Activated B cell treated with CpG ODN at 0.5 μM for 24 hours (primary cell): ENCODE measurements at regions of chr19 and their contacts with region 1.

Region 1: DNA sequence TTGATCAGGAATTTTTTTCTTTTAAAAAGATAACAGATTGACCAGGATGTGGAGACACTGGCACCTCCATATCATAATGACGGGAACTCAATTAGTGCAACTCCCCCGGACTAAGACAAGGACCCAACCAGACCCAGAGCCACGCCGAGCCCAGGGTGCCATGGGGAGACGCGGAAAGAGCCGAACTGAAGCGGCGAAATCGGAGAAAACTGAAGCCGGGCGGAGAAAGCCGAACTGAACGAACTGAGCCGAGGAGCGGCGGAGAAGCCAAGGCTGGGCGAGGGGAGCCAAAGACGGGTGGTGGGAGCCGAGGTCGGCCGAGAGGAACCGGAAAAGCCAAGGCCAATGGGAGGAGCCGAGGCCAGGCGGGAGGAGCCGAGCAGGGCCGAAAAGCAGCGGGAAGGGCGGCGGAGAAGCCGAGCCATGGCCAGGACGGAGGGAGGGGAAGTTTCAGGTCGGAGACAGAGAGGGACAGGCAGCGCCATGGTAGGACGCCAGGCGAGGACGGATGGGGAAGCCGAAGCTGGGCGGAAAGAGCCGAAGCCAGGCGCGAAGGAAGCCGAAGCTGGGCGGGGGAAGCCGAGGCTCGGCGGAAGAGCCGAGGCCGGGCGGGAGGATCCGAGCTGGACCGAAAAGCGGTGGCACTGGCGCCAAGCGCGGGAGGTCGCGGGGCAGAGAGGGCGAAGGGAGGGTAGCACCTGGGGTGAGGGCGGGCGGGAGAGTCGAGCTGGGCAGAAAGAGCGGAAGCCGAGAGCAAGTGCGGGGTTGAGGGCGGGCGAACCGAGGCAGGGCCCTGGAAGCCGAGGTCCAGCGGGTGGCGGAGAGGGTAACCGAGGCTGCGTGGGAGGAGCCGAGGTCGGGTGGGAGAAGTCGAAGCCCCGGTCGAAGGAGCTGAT is 29.4 kb downstream of the ZNF557 start:
- DNase-seq: peak; percentile 86
- ATAC-seq: peak; percentile 92
- H3K4me3 Mint-ChIP-seq: peak overlapping the region; percentile 92
- H3K27ac Mint-ChIP-seq: peak overlapping the region; percentile 95
- H3K4me1 Mint-ChIP-seq: peaks cover 18% of the 10 kb centered on the region
- H3K27me3 Mint-ChIP-seq: no peaks in the 10 kb centered on the region
- CTCF ChIP-seq: no peak

Region 2: GRCh38 chr19:7069042-7069903 is 29.7 kb before region 1 on chr19 and contains the start of gene ZNF557:
- CTCF ChIA-PET with region 1: no interaction called
- POLR2A ChIA-PET with region 1: interaction called, 45 read pairs
- intact Hi-C with region 1: loop called (anchors 1 kb)
- DNase-seq: peak; percentile 95
- ATAC-seq: peak; percentile 99
- H3K4me3 Mint-ChIP-seq: peak within 1 kb of the TSS; percentile 93
- H3K27ac Mint-ChIP-seq: peak within 1 kb of the TSS; percentile 92
- H3K4me1 Mint-ChIP-seq: peaks cover 17% of the 10 kb centered on the region
- H3K27me3 Mint-ChIP-seq: no peaks in the 10 kb centered on the region
- CTCF ChIP-seq: no peak
- total RNA-seq, gene ZNF557: 21.8 and 22.6 TPM in 2 replicates

Region 3: GRCh38 chr19:7197760-7198696 is 99.1 kb after region 1 on chr19:
- CTCF ChIA-PET with region 1: no interaction called
- POLR2A ChIA-PET with region 1: no interaction called
- intact Hi-C with region 1: loop called (anchors 5 kb)
- DNase-seq: peak; percentile 90
- ATAC-seq: peak; percentile 83
- H3K4me3 Mint-ChIP-seq: peak overlapping the region; percentile 89
- H3K27ac Mint-ChIP-seq: peak overlapping the region; percentile 96
- H3K4me1 Mint-ChIP-seq: peaks cover 23% of the 10 kb centered on the region
- H3K27me3 Mint-ChIP-seq: peaks cover 2% of the 10 kb centered on the region
- CTCF ChIP-seq: no peak

Region 4: DNA sequence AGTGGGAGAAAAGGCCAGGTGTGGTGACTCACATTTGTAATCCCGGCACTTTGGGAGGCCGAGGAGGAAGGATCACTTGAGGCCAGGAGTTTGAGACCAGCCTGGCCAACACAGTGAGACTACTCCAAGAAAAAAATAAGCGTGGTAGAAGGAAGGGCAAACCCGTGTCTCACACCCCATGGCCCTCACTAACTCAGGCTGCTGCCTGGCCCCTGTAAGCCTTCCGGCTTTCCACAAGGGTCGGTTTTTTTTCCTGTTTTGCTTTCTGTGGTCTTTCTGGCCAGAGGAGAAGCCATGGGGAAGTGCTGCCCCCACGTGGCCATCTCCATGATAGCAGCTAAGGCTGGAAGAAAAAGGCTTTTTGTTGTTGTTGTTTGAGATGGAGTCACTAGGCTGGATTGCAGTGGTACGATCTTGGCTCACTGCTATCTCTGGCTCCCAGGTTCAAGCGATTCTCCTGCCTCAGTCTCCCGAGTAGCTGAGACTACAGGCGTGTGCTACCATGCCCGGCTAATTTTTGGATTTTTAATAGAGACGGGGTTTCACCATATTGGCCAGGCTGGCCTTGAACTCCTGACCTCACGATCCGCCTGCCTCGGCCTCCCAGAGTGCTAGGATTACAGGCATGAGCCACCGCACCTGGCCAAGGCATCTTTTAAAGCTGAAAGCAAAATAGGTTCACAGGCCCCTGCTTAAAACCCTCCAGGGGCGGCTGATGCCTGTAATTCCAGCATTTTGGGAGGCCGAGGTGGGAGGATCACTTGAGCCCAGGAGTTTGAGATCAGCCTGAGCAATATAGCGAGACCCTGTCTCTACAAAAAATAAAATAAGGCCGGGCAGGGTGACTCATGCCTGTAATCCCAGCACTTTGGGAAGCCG is 242.2 kb after region 1 on chr19:
- CTCF ChIA-PET with region 1: interaction called, 12 read pairs
- POLR2A ChIA-PET with region 1: interaction called, 11 read pairs
- intact Hi-C with region 1: loop called (anchors 1 kb)
- DNase-seq: peak; percentile 83
- ATAC-seq: no peak
- H3K4me3 Mint-ChIP-seq: peak overlapping the region; percentile 52
- H3K27ac Mint-ChIP-seq: peak overlapping the region; percentile 82
- H3K4me1 Mint-ChIP-seq: peaks cover 91% of the 10 kb centered on the region
- H3K27me3 Mint-ChIP-seq: no peaks in the 10 kb centered on the region
- CTCF ChIP-seq: peak; percentile 64

Region 5: DNA sequence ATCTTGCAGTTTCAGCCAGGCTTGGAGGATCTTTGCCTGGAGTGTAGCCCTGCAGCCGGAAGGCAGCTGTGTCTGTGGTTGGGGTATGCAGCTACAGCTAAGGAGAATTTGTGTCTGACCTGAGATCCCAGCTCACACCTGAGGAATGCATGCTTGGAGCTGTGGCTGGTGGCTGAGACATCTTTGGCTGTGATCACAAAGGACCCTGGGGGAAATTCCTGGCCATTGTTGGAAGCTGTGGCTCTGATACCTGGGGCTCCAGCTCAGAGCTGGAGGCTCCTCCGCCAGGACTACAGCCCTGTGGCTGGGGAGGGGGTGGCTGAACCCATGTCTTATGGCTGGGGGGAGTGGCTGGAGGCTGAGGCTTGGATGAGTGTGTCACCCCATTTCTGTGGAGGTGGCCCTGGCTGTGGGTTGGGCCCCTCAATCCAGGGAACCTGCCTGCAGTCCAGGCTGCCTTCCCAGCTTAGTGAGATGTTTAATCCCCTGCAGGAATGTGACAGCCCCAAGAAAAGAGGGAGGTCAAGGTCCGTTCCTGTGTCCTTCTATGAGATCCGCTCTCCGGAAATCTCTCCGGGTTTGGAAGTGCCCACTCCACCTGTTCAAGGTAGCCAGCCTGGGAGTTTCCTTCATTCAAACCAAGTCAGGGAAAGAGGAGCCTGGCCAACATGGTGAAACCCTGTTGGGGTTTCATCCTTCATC is 277.4 kb after region 1 on chr19:
- CTCF ChIA-PET with region 1: interaction called, 4 read pairs
- POLR2A ChIA-PET with region 1: no interaction called
- intact Hi-C with region 1: loop called (anchors 1 kb)
- DNase-seq: no peak
- ATAC-seq: no peak
- H3K4me3 Mint-ChIP-seq: no peak overlapping the region
- H3K27ac Mint-ChIP-seq: peak overlapping the region; percentile 41
- H3K4me1 Mint-ChIP-seq: peaks cover 8% of the 10 kb centered on the region
- H3K27me3 Mint-ChIP-seq: no peaks in the 10 kb centered on the region
- CTCF ChIP-seq: no peak

Region 6: DNA sequence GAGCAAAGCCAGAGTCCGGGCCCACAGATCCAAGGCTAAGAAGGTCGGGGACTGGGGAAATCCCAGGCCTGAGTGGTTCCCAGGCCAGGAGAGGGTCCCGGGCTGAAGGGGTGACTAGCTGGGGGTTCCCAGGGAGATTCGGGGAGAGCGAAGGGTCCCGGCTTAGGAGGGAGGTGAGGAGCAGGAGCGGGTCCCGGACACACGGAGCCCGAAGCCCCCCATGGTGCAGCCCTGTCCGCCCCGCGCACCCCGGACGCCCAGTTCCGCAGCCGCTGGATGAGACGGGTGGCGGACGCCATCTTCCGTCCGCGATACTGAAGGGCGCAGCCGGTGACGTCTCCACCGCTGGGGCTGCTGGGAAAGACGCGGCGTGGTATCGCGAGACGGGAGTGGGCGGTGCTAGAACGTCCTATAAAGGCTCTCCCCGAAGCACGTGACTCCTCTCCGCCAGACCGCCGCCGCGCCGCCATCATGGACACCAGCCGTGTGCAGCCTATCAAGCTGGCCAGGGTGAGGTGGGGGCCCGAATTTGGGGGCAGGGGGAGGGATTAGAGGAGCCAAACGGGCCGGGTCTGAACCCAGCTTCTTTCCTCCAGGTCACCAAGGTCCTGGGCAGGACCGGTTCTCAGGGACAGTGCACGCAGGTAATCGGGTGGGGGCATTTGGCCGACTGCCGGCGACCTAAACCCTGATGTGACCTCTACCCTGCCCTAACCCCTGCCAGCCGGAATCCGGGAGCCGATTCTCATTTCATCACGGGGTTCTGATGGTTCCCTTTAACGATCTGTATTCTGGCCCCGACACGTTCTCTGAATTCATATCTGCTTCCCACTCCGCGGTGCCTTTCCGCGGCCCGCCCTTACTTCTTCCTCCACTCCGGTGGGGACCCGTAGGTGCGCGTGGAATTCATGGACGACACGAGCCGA is 1222.4 kb after region 1 on chr19 and contains the starts of genes NDUFA7 and RPS28:
- CTCF ChIA-PET with region 1: interaction called, 3 read pairs
- POLR2A ChIA-PET with region 1: interaction called, 15 read pairs
- intact Hi-C with region 1: no loop called
- DNase-seq: peak; percentile 97
- ATAC-seq: peak; percentile 95
- H3K4me3 Mint-ChIP-seq: peak within 1 kb of the TSS; percentile 98
- H3K27ac Mint-ChIP-seq: peak within 1 kb of the TSS; percentile 96
- H3K4me1 Mint-ChIP-seq: peaks cover 37% of the 10 kb centered on the region
- H3K27me3 Mint-ChIP-seq: no peaks in the 10 kb centered on the region
- CTCF ChIP-seq: no peak
- total RNA-seq, gene NDUFA7: 31.1 and 35.8 TPM in 2 replicates
- total RNA-seq, gene RPS28: 3,149 and 3,168 TPM in 2 replicates